Left ventricle myocardium superior (tissue), 1 donor: ENCODE measurements at regions of chr12 and their contacts with region 1.

Region 1: GRCh38 chr12:30985814-30986452 is 59.4 kb downstream of the TSPAN11 start:
- DNase-seq: peak; percentile 81
- ATAC-seq: peak; percentile 73

Region 2: DNA sequence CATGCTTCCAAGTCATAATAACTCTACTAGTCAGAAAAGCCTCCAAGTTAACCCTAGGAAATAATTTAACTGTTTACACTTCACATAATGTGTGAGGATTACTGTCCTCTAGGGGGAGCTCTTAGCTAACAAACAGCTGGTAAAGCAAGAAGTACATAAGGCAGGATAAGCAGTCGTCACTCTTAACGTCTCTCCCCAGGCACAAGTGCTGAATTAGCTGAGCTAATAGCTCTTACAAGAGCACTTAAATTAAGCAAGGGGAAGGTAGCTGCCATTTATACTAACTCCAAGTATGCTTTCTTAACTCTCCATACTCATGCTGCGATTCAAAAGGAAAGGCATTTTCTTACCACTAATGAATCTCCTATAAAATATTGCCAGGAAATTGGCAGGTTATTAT is 138.7 kb before region 1 on chr12:
- intact Hi-C with region 1: loop called (anchors 5 kb)
- DNase-seq: no peak
- ATAC-seq: peak; percentile 29